H1 (cell line): ENCODE measurements at regions of chr12 and their contacts with region 1.

Region 1: DNA sequence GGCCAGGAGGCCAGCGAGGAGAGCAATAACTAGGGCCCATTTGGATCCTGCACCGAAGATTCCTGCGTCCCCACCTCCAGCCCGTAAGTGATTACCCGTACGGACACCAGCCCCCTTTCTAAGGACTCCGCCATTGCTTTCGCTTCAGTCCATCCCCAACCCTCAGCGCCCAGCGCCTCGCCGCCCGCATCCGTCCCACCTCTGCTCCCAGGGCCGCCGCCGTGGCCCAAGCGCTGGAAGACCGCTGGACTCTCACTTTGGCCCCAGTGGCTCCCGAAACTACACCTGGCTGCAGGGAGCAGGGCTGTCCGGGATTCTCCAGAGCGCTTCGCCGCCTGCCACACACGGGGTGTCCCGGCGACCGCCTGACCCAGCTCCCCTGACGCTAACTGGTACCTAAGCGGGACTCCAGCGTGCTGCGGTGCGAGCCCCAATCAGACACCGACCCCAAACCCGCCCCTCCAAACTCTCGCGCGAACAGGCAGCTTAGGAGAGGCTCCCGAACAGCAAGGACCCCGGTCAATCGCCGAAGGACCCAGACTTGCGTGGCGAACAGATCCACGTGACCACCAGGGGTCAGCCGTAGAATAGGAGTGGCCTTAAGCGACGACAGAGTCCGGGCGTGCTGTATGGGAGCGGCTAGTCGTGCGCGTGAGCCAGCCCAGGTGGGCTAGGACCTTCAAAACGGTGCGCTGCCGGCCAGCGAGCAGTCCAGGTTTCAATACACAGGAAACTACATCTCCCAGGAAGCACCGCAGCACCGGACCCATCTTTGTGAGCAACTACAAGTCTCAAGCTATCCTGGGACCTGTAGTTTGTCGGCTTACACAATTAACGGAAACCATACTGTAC is at the start of gene CNPY2:
- DNase-seq: peak; percentile 94 to 98
- H3K4me3 ChIP-seq: peak within 1 kb of the TSS; percentile 70 to 98 (median 96)
- H3K27ac ChIP-seq: peak within 1 kb of the TSS; percentile 86
- H3K4me1 ChIP-seq: peaks cover 0 to 6% (median 3%) of the 10 kb centered on the region in 4 experiments; a peak in 5 of 7 replicates
- H3K27me3 ChIP-seq: no peaks in the 10 kb centered on the region
- CTCF ChIP-seq: peak; percentile 20 to 44 (median 28)
- EP300 ChIP-seq: no peak
- POLR2A ChIP-seq: peak; percentile 84 to 97
- RAD21 ChIP-seq: peak; percentile 37 to 44; a peak in 3 of 4 replicates
- total RNA-seq, gene CNPY2: 195 and 203 TPM in 2 replicates

Region 2: DNA sequence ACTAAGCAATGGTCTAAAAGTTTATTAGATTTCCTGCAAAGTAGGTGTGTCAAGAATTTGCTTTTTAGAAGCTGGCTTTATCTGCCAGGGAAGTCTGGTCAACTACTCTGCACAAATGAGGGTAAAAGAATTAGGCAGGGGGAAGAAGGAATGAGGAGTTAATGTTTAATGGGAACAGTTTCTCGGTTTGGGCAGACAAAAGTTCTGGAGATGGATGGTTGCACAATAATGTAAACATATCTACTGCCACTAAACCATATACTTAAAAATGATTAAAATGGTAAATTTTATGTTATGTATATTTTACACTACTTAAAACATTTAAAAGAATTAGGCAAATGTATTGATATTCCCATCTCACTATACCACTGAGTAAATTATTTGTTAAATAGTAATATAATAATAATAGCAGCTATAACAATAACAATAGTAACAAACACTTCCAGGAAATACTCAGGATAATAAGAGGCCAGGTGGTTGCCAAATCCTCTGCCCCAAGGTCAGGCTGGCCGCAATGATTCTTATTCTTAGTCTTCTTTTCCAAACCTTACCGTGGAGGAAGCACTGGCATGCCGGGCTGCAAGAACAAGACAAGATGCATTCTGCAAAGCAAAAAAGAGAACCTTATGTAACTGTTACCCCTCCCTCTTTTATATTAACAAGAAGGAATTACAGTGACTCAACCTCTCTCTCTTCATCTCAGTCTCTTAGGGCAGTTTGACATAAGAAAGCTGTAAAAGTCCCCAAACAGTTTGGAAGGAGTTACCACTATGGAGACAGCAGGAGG is 29.6 kb before region 1 on chr12:
- CTCF ChIA-PET with region 1: interaction called, 3 read pairs
- POLR2A ChIA-PET with region 1: interaction called, 12 read pairs
- DNase-seq: no peak
- H3K4me3 ChIP-seq: no peak overlapping the region
- H3K27ac ChIP-seq: no peak overlapping the region
- H3K4me1 ChIP-seq: no peaks in the 10 kb centered on the region
- H3K27me3 ChIP-seq: no peaks in the 10 kb centered on the region
- CTCF ChIP-seq: no peak
- EP300 ChIP-seq: no peak
- POLR2A ChIP-seq: no peak
- RAD21 ChIP-seq: no peak

Region 3: GRCh38 chr12:56333679-56334489 is 18.0 kb after region 1 on chr12 and contains the start of gene PAN2:
- CTCF ChIA-PET with region 1: interaction called, 38 read pairs
- POLR2A ChIA-PET with region 1: interaction called, 37 read pairs
- DNase-seq: peak; percentile 67 to 92
- H3K4me3 ChIP-seq: peak within 1 kb of the TSS; percentile 53 to 73 (median 62)
- H3K27ac ChIP-seq: peak within 1 kb of the TSS; percentile 81; the same call in 1 of the 2 replicates
- H3K4me1 ChIP-seq: peaks cover 9 to 23% (median 13%) of the 10 kb centered on the region in 4 experiments
- H3K27me3 ChIP-seq: no peaks in the 10 kb centered on the region
- CTCF ChIP-seq: peak; percentile 23 to 58 (median 28); a peak in 3 of 4 replicates
- EP300 ChIP-seq: peak in 1 of 2 experiments; percentile 48; a peak in 1 of 3 replicates
- POLR2A ChIP-seq: peak; percentile 35 to 82
- RAD21 ChIP-seq: peak in 1 of 2 experiments; percentile 13; a peak in 1 of 4 replicates
- total RNA-seq, gene PAN2: 30.5 and 36.7 TPM in 2 replicates

Region 4: DNA sequence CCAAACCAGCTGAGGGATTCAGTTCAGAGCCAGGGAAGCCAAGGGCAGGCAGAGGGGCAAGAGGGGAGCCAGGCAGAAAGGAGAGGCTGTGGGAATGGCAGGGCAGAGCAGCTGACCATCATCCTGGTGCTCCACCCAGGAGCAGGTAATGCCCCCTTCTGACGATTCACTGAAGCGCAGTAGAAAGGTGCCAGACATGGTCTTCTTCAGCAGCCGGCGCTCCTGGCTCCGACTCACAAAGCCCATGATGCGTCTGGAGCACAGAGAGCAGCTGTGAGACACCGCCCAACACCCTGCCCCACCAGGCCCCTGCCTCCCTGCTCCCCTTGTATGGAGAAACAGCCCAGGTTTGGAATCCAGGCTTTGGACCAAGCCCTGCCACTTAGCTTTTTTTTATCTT is 30.9 kb after region 1 on chr12:
- CTCF ChIA-PET with region 1: interaction called, 21 read pairs
- POLR2A ChIA-PET with region 1: interaction called, 26 read pairs
- DNase-seq: peak in 1 of 2 experiments; percentile 63
- H3K4me3 ChIP-seq: no peak overlapping the region
- H3K27ac ChIP-seq: no peak overlapping the region
- H3K4me1 ChIP-seq: no peaks in the 10 kb centered on the region
- H3K27me3 ChIP-seq: no peaks in the 10 kb centered on the region
- CTCF ChIP-seq: peak; percentile 38 to 56 (median 46)
- EP300 ChIP-seq: no peak
- POLR2A ChIP-seq: no peak
- RAD21 ChIP-seq: peak; percentile 52 to 61

Region 5: DNA sequence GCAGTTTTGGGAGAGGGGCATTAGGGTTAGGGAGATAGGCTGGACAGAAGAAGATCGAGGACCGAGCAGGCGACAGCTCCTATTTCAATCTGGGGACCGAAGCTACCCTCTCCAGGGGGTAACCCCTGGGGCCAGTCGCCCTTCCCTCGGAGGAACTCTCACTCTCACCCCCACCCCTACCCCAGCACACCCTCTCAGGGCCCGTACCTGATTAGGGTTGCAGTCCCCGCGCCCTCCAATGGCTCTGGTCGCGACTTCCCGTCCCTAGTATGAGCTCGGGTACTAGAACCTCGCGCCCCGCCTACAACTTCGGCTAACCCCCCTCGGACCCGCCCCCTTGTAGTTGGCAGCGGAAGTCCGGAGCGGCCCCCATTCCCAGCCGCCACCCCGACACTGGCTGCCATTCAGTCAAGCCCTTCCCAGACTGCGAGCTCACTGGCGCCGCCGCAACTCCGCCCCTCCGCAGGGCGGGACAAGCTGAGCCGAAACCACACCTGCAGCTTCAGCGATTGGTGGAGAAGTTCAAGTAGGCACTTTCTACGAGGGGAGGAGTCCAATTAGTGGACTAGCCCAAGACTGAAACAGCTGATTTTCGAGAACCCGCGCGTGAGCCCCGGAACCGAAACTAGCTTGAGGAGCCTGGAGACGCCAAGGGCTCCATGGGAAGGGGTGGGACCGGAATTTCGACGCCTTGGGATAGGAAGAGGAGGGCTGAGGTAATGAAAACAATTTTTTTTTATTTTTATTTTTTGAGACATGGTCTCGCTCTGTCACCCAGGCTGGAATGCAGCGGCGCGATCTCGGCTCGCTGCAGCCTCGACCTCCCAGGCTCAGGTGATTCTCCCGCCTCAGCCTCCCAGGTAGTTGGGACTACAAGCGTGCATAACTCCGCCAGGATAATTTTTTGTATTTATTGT is 44.3 kb after region 1 on chr12 and contains the start of gene STAT2:
- CTCF ChIA-PET with region 1: interaction called, 10 read pairs
- POLR2A ChIA-PET with region 1: interaction called, 18 read pairs
- DNase-seq: peak; percentile 98 to 99
- H3K4me3 ChIP-seq: peak within 1 kb of the TSS; percentile 78 to 88 (median 84)
- H3K27ac ChIP-seq: peak within 1 kb of the TSS; percentile 70
- H3K4me1 ChIP-seq: peaks cover 0 to 5% (median 2%) of the 10 kb centered on the region in 4 experiments; a peak in 4 of 7 replicates
- H3K27me3 ChIP-seq: peaks cover 0 to 3% (median 0%) of the 10 kb centered on the region in 4 experiments; a peak in 1 of 7 replicates
- CTCF ChIP-seq: no peak
- EP300 ChIP-seq: peak; percentile 65 to 71; a peak in 2 of 3 replicates
- POLR2A ChIP-seq: peak in 1 of 2 experiments; percentile 56; a peak in 2 of 3 replicates
- RAD21 ChIP-seq: no peak
- total RNA-seq, gene STAT2: 42.4 and 44.7 TPM in 2 replicates

Region 6: GRCh38 chr12:56448860-56449621 is 133.2 kb after region 1 on chr12 and contains the start of gene TIMELESS:
- CTCF ChIA-PET with region 1: interaction called, 7 read pairs
- POLR2A ChIA-PET with region 1: interaction called, 16 read pairs
- DNase-seq: peak; percentile 67 to 95
- H3K4me3 ChIP-seq: peak within 1 kb of the TSS; percentile 52 to 90 (median 70)
- H3K27ac ChIP-seq: peak within 1 kb of the TSS; percentile 93
- H3K4me1 ChIP-seq: peaks cover 3 to 6% (median 5%) of the 10 kb centered on the region in 4 experiments; a peak in 5 of 7 replicates
- H3K27me3 ChIP-seq: no peaks in the 10 kb centered on the region
- CTCF ChIP-seq: no peak
- EP300 ChIP-seq: 0 out of 3 replicates have a peak, but pooled peaks of 1 of the 2 experiments have one; percentile 7
- POLR2A ChIP-seq: peak; percentile 94 to 95
- RAD21 ChIP-seq: peak in 1 of 2 experiments; percentile 0; a peak in 1 of 4 replicates
- total RNA-seq, gene TIMELESS: 86.7 and 88.7 TPM in 2 replicates

Region 7: DNA sequence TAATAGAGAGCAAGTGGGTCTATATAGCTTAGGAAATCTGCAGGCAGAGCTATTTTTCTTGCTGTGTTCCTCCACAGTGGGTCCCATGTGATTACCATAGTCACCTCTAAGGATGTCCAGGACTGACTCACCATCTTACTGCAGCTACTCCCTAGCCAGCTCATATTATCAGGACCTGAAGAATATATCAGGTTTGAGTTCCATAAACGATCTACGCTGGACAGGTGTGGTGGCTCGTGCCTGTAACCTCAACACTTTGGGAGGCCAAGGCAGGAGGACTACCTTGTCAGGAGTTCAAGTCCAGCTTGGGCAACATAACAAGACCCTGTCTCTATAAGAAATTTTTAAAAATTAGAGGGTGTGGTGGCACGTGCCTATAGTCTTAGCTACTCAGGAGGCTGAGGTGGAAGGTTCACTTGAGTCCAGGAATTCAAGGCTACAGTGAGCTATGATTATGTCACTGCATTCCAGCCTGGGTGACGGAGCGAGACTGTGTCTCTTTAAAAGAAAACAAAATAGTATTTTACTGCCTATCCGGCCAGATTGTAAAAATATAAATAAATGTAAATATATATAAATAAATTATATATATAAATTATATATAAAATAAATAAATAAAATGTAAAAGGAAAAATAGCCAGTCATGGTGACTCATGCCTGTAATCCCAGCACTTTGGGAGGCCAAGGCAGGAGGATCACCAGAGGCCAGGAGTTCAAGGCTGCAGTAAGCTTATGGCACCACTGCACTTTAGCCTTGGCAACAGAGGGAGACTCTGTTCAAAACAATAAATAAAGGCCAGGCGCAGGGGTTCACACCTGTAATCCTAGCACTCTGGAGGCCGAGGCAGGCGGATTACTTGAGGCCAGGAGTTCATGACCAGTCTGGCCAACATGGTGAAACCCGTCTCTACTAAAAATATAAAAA is 145.6 kb after region 1 on chr12:
- CTCF ChIA-PET with region 1: interaction called, 25 read pairs
- POLR2A ChIA-PET with region 1: interaction called, 28 read pairs
- DNase-seq: no peak
- H3K4me3 ChIP-seq: no peak overlapping the region
- H3K27ac ChIP-seq: no peak overlapping the region
- H3K4me1 ChIP-seq: peaks cover 4 to 9% (median 6%) of the 10 kb centered on the region in 4 experiments; a peak in 6 of 7 replicates
- H3K27me3 ChIP-seq: no peaks in the 10 kb centered on the region
- CTCF ChIP-seq: no peak
- EP300 ChIP-seq: no peak
- POLR2A ChIP-seq: no peak
- RAD21 ChIP-seq: no peak